ENCODE measurements at regions of chrX and their contacts with region 1.

Region 1: DNA sequence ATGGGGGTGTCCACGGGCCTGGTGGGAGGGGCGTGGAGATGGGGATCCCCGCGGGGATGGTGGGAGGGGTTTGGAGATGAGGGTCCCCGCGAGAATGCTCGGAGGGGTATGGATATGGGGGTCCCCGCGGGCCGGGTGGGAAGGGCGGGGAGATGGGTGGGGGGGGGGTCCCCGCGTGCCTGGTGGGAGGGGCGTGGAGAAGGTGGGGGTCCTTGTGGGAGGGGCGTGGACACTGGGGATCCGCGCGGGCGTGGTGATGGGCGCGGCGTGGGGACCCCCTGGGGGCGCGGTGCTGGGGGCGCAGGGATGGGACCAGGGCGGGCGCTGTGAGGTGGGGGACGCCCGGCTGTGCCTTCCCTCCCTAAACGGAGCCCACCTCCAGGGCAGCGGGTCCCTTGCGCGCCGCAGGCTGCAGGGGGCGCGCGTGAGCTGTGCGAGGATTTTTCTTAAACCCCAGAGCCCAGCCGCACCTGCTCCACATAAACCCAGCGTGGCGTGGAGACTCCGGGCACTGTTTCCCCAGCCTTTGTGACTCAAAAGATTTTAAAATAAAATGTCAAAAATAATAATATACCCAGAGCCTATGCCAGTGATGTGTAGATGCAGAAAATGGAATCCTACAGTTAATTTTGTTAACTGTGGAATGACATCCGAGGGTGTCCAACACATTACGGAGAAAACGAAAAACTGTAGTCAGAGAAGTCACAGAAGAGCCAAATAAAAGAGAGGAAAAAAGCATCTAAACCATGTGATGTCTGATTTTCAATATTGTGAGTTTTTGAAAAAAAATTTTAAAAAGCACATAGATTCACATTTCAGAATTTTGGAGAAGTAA is 1.5 kb upstream of the ASMTL start:
- DNase-seq: peak; percentile 86 to 90
- ATAC-seq: peak; percentile 28 to 57 (median 39)
- H3K4me3 ChIP-seq: peak overlapping the region; percentile 55
- H3K27ac ChIP-seq: no peak overlapping the region
- H3K4me1 ChIP-seq: no peaks in the 10 kb centered on the region
- H3K27me3 ChIP-seq: no peaks in the 10 kb centered on the region
- CTCF ChIP-seq: peak; percentile 91

Region 2: DNA sequence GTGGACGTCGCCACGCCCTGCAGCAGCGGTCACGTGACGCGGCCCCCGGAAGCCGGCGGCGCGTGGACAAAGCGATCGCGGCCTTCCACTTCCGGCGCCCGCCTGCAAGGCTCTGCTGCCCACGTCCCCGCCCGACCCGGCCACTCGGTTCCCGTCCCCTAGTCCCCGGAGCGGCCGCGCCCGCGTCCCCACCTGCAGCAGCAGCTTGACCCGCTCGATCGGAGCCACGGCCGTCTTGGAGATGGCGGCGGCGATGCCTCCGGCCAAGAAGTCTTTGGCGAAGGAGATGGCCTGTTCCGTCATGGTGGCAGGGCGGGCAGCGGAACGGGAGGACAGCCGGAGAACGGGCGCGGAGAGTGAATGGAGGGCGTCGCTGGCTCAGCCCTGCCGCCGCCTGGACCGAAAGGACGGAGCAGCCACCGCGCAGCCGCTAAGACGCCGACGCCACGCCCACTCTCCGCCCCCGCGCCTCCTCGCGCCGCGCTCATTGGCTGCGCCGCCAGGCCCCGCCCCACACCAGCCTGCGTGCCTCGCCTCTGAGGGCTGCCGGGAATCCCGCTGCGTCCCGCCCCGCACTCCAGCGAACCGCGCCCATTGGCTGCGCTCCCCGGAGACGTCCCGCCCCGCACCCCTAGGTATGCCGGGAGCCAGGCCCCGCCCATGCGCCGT is 62.3 kb before region 1 on chrX and contains the start of gene SLC25A6:
- intact Hi-C with region 1: loop called (anchors 5 to 10 kb)
- DNase-seq: peak; percentile 99 to 100
- ATAC-seq: peak; percentile 90 to 94 (median 92)
- H3K4me3 ChIP-seq: peak within 1 kb of the TSS; percentile 96
- H3K27ac ChIP-seq: peak within 1 kb of the TSS; percentile 99
- H3K4me1 ChIP-seq: peaks cover 46% of the 10 kb centered on the region
- H3K27me3 ChIP-seq: no peaks in the 10 kb centered on the region
- CTCF ChIP-seq: peak; percentile 13
- total RNA-seq, gene SLC25A6: 73.9 to 92.4 (median 81.5) TPM

Region 3: DNA sequence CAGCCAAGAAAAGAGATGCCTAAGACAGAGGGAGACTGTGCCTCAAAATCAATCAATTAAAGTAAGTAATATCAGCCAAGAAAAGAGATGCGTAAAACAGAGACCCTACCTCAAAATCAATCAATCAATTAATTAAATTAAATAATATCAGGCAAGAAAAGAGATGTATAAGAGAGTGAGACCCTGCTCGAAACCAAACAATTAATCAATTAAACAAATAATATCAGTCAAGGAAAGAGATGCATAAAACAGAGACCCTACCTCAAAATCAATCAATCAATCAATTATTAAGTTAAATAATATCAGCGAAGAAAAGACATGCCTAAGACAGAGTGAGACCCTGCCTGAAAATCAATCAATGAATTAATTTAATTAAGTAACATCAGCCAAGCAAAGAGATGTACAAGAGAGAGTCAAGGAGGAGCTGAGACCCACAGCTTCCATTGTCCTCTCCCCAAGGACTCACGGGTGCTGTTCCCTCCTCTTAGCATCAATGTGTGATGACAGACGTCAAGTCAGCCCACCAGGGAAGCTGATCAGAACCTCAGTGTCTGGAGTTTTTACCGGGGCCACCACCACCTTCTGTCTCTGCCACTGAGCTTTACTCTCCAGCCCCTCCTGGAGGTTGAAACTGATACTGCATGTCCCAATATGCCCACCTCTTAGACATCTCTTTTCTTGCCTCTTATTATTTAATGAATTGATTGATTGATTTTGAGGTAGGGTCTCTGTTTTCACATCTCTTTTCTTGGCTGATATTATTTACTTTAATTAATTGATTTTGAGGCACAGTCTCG is 126.8 kb after region 1 on chrX:
- intact Hi-C with region 1: loop called in 1 of 2 experiments (anchors 2 kb)
- DNase-seq: no peak
- ATAC-seq: peak in 3 of 4 donors; percentile 53 to 68 (median 62)
- H3K4me3 ChIP-seq: no peak overlapping the region
- H3K27ac ChIP-seq: no peak overlapping the region
- H3K4me1 ChIP-seq: no peaks in the 10 kb centered on the region
- H3K27me3 ChIP-seq: peaks cover 0 to 7% (median 0%) of the 10 kb centered on the region in 3 donors
- CTCF ChIP-seq: peak; percentile 75

Region 4: DNA sequence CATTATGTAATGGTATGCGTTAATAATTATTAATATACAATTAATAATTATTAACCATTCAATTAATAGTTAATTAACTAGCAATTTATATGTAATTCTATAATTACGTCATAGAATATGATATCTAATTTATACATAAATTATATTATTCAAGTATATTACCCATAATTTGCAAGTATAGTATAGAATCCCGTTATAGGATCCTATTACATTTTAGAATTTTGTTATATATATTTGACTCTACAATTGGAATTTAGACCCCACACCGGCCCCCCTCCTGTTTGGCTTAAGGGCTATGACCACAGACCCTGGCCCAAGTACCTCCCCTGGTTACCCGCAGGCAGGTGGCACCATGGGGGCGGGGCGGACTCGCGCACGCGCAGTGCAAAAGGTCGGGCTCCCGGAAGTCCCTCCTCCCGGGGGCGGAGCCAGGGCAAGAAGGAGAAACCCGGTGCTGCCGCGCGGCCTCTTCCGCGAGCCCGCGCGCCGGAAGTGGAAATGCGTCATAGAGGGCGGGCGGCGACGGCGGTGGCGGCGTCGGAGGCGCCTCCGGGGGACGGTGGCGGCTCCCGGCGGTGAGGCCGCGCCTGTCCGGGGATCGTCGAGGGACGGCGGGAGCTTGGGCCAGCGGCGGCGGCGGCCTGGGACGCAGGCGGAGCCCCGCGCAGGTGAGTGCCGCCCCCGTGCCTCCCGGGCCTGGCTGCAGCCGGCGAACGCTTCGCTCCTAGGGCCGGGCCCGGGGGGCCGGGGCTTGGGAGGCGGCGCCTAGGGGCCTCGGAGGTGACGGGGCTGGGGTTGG is 137.1 kb after region 1 on chrX and contains the start of gene AKAP17A:
- intact Hi-C with region 1: loop called (anchors 5 to 10 kb)
- DNase-seq: peak; percentile 96 to 98
- ATAC-seq: peak; percentile 97 to 99 (median 98)
- H3K4me3 ChIP-seq: peak within 1 kb of the TSS; percentile 77
- H3K27ac ChIP-seq: peak within 1 kb of the TSS; percentile 88
- H3K4me1 ChIP-seq: peaks cover 12% of the 10 kb centered on the region
- H3K27me3 ChIP-seq: no peaks in the 10 kb centered on the region
- CTCF ChIP-seq: no peak
- total RNA-seq, gene AKAP17A: 9.9 to 20.4 (median 13.1) TPM

Region 5: GRCh38 chrX:2183193-2183725 is 729.1 kb after region 1 on chrX:
- intact Hi-C with region 1: no loop called
- DNase-seq: no peak
- ATAC-seq: no peak
- H3K4me3 ChIP-seq: no peak overlapping the region
- H3K27ac ChIP-seq: no peak overlapping the region
- H3K4me1 ChIP-seq: no peaks in the 10 kb centered on the region
- H3K27me3 ChIP-seq: peaks cover 0 to 2% (median 0%) of the 10 kb centered on the region in 3 donors
- CTCF ChIP-seq: no peak

Region 6: GRCh38 chrX:2819345-2820135 is 1365.4 kb after region 1 on chrX:
- intact Hi-C with region 1: loop called in 1 of 2 experiments (anchors 10 kb)
- DNase-seq: no peak
- ATAC-seq: no peak
- H3K4me3 ChIP-seq: no peak overlapping the region
- H3K27ac ChIP-seq: no peak overlapping the region
- H3K4me1 ChIP-seq: no peaks in the 10 kb centered on the region
- H3K27me3 ChIP-seq: peaks cover 0 to 4% (median 0%) of the 10 kb centered on the region in 3 donors
- CTCF ChIP-seq: peak; percentile 34